Activated naive CD4-positive, alpha-beta T cell treated with anti-CD3 and anti-CD28 coated beads for 36 hours (primary cell): ENCODE measurements at regions of chr6 and their contacts with region 1.

Region 1: GRCh38 chr6:30742316-30743098 is at the start of gene FLOT1:
- DNase-seq: peak; percentile 96
- H3K4me3 Mint-ChIP-seq: peak within 1 kb of the TSS; percentile 94
- H3K27ac Mint-ChIP-seq: peak within 1 kb of the TSS; percentile 96
- H3K4me1 Mint-ChIP-seq: peaks cover 61% of the 10 kb centered on the region
- H3K27me3 Mint-ChIP-seq: no peaks in the 10 kb centered on the region
- total RNA-seq, gene FLOT1: 162 to 173 TPM

Region 2: GRCh38 chr6:30730601-30731435 is 11.7 kb before region 1 on chr6:
- CTCF ChIA-PET with region 1: interaction called, 10 read pairs
- intact Hi-C with region 1: loop called (anchors 1 kb)
- DNase-seq: peak; percentile 94
- H3K4me3 Mint-ChIP-seq: peak overlapping the region; percentile 29
- H3K27ac Mint-ChIP-seq: no peak overlapping the region
- H3K4me1 Mint-ChIP-seq: peaks cover 47% of the 10 kb centered on the region
- H3K27me3 Mint-ChIP-seq: no peaks in the 10 kb centered on the region

Region 3: GRCh38 chr6:30769088-30769852 is 26.8 kb after region 1 on chr6:
- CTCF ChIA-PET with region 1: interaction called, 6 read pairs
- intact Hi-C with region 1: loop called (anchors 1 kb)
- DNase-seq: peak; percentile 85
- H3K4me3 Mint-ChIP-seq: peak overlapping the region; percentile 62
- H3K27ac Mint-ChIP-seq: peak overlapping the region; percentile 97
- H3K4me1 Mint-ChIP-seq: peaks cover 79% of the 10 kb centered on the region
- H3K27me3 Mint-ChIP-seq: no peaks in the 10 kb centered on the region

Region 4: DNA sequence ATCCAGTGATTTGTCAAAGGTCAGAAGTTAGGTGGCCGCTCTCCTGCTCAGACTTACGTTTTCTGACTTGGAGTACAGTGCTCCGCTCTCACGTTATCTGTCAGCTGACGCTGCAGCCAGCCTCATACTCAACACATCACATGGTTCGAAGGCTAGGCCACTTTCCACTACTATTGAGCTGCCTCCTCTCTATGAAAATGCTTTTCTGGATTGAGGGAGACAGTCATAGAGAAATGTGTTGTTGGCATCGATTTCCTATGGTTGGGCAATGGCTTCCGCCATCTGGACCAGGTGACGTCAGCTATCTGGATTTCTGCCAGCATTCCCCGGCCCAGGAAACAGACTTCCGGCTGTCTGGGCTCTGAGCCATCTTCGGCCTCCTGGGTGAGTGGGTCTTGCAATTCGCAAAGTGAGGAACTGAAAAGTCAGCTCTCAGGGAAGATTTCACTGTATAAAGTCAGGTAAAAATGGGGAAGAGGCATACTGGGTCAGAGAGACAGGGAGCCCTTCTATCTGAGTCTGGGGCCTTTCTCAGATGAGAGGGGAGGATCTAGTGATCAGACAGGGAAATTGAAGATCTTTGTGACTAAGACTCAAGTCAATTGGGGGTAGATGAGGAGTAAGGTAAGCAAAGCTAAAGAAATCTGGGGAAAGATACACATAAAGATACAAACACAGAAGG is 39.4 kb after region 1 on chr6:
- CTCF ChIA-PET with region 1: interaction called, 3 read pairs
- intact Hi-C with region 1: loop called (anchors 5 kb)
- DNase-seq: peak; percentile 56
- H3K4me3 Mint-ChIP-seq: peak overlapping the region; percentile 56
- H3K27ac Mint-ChIP-seq: peak overlapping the region; percentile 76
- H3K4me1 Mint-ChIP-seq: peaks cover 63% of the 10 kb centered on the region
- H3K27me3 Mint-ChIP-seq: no peaks in the 10 kb centered on the region

Region 5: DNA sequence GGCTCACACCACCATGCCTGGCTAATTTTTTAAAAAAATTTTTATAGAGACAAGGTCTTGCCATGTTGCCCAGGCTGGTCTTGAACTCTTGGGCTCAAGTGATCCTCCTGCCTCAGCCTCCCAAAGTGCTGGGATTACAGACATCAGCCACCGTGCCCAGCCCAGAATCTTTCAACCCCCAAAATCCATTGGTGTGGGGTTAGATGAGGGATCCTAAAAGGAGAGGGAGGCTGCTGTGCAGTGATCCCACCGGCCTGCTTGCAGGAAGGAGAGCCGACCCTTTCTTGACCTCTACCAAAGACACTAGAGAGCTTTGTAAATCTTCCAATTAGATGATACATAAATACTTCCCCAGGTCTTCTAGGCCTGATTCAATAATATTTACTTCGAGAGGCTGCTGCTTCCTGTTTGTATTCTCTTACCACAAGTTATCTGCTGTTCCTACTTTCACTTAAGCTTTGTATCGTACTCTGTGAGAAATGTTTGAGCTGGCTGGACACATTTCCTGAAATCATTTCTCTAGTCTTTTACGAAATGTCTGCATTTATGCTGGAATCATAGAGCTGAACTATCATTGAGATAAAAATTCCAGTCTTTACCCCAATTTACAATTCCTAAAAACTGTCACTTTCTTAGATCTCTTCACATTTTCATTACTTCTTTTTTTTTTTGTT is 51.2 kb after region 1 on chr6:
- CTCF ChIA-PET with region 1: no interaction called
- intact Hi-C with region 1: loop called (anchors 2 kb)
- DNase-seq: no peak
- H3K4me3 Mint-ChIP-seq: peak overlapping the region; percentile 60
- H3K27ac Mint-ChIP-seq: peak overlapping the region; percentile 89
- H3K4me1 Mint-ChIP-seq: peaks cover 52% of the 10 kb centered on the region
- H3K27me3 Mint-ChIP-seq: no peaks in the 10 kb centered on the region

Region 6: DNA sequence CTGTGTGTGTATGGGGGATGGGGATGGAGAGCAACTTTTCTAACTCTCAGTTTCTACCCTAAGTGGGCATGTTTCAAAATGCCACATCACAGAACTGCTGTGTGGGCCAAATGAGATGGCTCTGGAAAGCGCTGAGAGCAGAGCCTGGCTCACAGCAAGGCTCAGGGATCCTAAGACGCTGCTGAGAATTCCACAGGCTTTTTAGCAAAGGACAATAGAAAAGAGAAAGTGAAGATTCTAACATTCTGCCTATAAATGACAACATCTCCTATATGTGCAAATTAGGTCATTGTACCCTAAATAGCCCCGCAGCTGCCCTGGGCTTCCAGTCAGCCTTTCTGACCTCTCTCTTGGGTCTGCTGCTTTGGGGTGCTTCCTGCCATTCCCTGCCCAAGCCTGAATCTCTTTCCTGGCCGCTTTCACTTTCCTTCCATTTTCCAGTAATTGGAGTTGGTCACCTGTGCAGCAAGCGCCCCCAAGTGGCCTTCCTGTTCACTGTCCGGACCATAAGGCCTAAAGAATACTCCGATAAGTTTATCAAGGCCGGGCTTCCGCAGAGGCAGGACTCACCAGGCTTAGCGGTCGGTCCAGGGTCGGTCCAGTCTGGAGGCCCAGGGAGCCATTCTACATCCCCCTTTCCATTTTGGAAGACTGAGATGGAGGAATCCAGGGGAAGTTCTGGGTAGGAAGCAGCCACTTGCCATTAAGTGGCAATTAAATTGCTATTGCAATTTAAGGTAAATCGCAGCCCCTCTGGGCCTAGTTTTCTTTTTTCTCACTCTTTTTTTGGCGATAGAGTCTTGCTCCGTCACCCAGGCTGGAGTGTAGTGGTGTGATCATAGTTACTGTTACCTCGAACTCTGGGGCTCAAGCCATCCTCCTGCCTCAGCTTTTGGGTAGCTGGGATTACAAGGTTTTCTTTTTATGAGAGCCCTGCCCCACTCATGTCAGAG is 135.2 kb after region 1 on chr6:
- CTCF ChIA-PET with region 1: interaction called, 5 read pairs
- intact Hi-C with region 1: loop called (anchors 1 kb)
- DNase-seq: peak; percentile 89
- H3K4me3 Mint-ChIP-seq: peak overlapping the region; percentile 68
- H3K27ac Mint-ChIP-seq: peak overlapping the region; percentile 84
- H3K4me1 Mint-ChIP-seq: peaks cover 23% of the 10 kb centered on the region
- H3K27me3 Mint-ChIP-seq: no peaks in the 10 kb centered on the region